ENCODE measurements at regions of chr7 and their contacts with region 1.

Region 1: DNA sequence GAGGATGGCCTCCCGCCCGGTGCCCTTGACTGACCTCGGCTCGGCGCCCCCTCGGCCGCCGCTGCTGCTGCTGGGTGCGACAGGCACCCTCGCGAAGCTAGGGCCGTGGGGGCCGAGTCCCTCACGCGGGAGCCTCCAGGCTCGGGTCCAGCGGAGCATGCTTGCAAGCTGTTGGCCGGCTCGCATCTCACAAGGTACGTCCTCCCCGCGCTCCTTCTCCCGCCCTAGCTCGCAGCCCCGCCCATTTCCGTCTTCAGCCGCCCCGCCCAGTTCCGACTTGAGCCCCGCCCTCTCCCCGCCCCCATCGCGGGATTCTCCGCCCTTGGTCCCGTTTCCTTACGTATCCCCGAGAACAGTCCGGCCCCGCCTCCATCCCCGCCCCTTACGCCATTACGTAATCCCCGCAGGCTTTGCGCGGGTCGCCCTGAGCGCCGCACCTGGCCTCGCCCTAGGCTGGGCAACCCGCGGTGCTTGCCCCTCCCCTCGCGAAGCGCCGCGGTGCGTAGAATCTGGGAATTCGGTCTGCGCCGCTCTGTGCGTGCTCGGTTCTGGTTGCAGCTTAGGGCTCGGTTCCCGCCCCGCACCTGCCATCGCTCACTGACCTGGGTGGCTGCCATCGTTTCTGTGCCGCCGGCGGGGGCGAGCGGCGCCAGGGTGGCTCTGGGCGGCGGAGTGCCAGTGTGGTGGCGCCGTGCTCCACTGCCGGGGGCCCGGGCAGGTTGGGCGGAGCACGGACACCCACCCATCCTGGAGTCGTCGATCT is at the start of gene ABHD11:
- H3K4me3 ChIP-seq: peak within 1 kb of the TSS; percentile 67
- H3K27ac ChIP-seq: peak within 1 kb of the TSS; percentile 90
- H3K4me1 ChIP-seq: peaks cover 8% of the 10 kb centered on the region
- CTCF ChIP-seq: peak; percentile 72

Region 2: GRCh38 chr7:73578342-73579127 is 160.3 kb before region 1 on chr7 and contains the start of gene TBL2:
- CTCF ChIA-PET with region 1: interaction called, 3 read pairs
- POLR2A ChIA-PET with region 1: interaction called, 12 read pairs
- H3K4me3 ChIP-seq: peak within 1 kb of the TSS; percentile 84
- H3K27ac ChIP-seq: peak within 1 kb of the TSS; percentile 77
- H3K4me1 ChIP-seq: no peaks in the 10 kb centered on the region
- CTCF ChIP-seq: no peak

Region 3: DNA sequence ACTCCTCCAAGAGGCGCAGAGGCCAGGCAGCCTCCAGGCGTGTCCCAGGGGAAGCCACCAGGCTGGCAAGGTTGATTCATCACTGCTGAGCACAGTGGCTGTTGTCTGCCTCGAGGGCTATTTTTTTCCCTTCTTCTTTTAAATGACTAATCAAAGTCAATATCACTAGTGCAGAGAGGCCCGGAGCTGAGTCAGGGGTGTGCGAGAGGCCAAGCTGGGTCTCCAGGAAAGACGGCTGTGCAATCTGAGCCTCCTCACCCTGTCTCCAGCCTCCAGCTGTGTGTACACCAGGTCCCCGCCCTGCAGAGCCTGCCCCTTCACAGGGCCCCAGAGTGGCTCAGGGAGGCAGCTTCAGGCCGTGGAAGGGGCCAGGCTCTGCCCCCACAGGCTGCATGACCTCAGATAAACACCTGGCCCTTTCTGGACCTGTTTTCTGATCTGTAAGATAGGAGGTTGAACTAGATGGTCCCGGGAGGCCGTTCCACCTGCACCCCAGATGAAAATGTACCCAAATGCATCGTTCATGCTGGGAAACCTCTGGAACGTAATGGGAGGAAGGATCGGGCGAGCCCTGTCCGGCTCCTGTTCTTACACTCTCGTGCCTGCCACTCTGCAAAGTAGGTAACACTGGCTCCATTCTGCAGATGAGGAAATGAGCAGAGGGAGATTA is 23.0 kb before region 1 on chr7:
- CTCF ChIA-PET with region 1: interaction called, 6 read pairs
- POLR2A ChIA-PET with region 1: interaction called, 12 read pairs
- H3K4me3 ChIP-seq: no peak overlapping the region
- H3K27ac ChIP-seq: peak overlapping the region; percentile 6
- H3K4me1 ChIP-seq: peaks cover 18% of the 10 kb centered on the region
- CTCF ChIP-seq: no peak

Region 4: DNA sequence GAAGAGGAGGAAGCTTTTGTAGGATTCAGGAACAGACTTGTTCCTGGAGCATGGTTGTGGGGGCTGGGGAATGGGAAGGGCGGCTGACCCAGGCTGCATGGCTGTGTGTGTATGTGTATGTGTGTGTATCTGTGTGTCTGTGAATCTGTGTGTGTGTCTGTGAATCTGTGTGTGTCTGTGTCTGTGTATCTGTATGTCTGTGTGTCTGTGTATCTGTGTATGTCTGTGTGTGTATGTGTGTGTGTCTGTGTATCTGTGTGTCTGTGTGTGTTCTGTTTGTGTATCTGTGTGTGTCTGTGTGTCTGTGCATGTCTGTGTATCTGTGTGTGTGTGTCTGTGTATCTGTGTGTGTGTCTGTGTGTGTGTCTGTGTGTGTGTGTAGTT is 12.7 kb before region 1 on chr7:
- CTCF ChIA-PET with region 1: interaction called, 11 read pairs
- POLR2A ChIA-PET with region 1: interaction called, 4 read pairs
- H3K4me3 ChIP-seq: no peak overlapping the region
- H3K27ac ChIP-seq: no peak overlapping the region
- H3K4me1 ChIP-seq: no peaks in the 10 kb centered on the region
- CTCF ChIP-seq: no peak

Region 5: DNA sequence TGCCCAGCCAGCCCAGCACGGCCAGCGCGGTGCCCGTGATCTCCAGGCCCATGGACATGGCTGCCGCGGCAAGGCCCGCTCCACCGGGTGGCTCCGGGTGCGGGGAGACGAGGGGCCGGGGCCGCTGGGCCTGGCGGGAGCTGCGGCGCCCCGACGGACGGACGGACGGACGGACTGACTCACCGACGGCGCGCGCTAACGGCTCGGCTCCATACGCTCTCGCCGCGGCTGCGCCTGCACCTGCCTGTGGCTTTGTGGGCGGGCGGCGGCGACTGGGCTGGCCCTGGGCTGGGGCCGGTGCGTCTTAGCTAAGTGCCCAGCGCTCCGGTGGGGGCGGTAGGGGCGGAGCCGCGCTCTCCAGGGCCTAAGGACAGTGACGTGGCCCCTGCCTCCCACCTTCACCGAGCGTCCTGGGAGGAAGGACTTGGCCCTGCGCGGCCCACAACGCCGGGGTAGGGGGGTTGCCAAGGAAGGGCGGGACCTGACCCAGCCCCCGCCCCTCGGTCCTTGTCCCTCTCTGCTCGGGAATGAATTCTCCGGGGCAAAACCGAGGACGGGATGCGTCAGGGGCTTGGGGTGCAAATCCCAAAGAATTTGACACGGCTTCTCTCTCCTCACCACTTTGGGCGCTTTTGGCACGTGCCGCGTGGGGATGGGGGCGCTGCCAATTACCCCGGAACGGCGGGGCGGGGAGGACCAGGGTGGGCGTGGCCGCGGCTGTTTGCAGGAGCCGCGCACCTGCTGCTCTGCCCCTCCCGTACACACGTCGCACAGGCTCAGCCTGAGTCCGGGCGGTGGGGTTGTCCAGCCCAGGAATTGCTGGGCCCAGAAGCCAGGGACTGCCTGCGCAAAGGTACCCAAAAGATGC is 31.4 kb after region 1 on chr7 and contains the start of gene CLDN3:
- CTCF ChIA-PET with region 1: interaction called, 7 read pairs
- POLR2A ChIA-PET with region 1: interaction called, 15 read pairs
- H3K4me3 ChIP-seq: peak within 1 kb of the TSS; percentile 50
- H3K27ac ChIP-seq: no peak within 1 kb of the TSS; the same call in 1 of the 2 replicates
- H3K4me1 ChIP-seq: no peaks in the 10 kb centered on the region
- CTCF ChIP-seq: no peak